WTC11 (cell line): ENCODE measurements at regions of chr12 and their contacts with region 1.

Region 1: GRCh38 chr12:130871286-130872178 is at the start of gene RAN:
- DNase-seq: peak; percentile 80
- ATAC-seq: peak; percentile 71
- H3K4me3 Mint-ChIP-seq: peak within 1 kb of the TSS; percentile 97
- H3K27ac Mint-ChIP-seq: peak within 1 kb of the TSS; percentile 99
- H3K4me1 Mint-ChIP-seq: peaks cover 51% of the 10 kb centered on the region
- H3K27me3 Mint-ChIP-seq: no peaks in the 10 kb centered on the region; the same call in 1 of the 2 replicates
- CTCF ChIP-seq: no peak
- total RNA-seq, gene RAN: 1,744 to 1,783 TPM (median 1,745 TPM) in 3 replicates

Region 2: GRCh38 chr12:130826149-130826801 is 45.3 kb before region 1 on chr12:
- CTCF ChIA-PET with region 1: interaction called, 36 read pairs
- POLR2A ChIA-PET with region 1: interaction called, 3 read pairs
- DNase-seq: peak; percentile 83
- ATAC-seq: peak; percentile 88
- H3K4me3 Mint-ChIP-seq: no peak overlapping the region
- H3K27ac Mint-ChIP-seq: peak overlapping the region; percentile 80
- H3K4me1 Mint-ChIP-seq: peaks cover 36% of the 10 kb centered on the region
- H3K27me3 Mint-ChIP-seq: no peaks in the 10 kb centered on the region
- CTCF ChIP-seq: peak; percentile 98

Region 3: DNA sequence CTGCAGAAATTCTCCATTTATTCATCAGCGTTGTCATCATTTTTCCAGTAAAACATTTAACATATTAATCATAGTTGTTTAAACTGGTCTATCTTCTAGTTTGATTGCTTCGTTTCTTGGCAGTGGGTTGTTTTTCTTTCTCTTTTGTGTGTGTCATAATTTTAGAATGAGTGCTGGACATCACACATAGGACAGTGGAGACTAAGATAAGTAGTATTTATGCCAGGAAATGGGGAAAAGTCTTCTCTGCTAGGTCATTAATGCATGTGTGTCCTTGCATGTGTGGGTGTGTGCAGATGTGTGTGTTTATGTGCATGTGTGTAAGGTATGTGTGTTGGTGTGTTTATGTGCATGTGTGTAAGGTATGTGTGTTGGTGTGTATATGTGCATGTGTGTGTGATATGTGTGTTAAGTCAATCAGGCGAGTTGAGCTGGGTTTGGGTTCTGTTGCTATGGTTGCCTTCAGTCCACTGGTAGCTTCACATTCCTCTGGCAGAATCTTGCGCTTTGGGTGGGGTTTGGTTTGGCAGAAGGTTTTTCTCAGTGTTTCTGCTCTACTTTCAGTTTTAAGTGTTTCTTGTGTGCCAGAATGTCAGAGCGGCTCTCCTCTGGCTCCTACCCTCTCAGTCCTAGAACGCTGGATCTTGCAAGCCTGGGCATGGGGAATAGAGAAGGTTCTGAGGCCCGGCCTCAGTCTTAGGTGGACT is 74.4 kb after region 1 on chr12:
- CTCF ChIA-PET with region 1: no interaction called
- POLR2A ChIA-PET with region 1: no interaction called
- DNase-seq: no peak
- ATAC-seq: no peak
- H3K4me3 Mint-ChIP-seq: no peak overlapping the region
- H3K27ac Mint-ChIP-seq: no peak overlapping the region
- H3K4me1 Mint-ChIP-seq: peaks cover 33% of the 10 kb centered on the region
- H3K27me3 Mint-ChIP-seq: peaks cover 22% of the 10 kb centered on the region
- CTCF ChIP-seq: no peak

Region 4: DNA sequence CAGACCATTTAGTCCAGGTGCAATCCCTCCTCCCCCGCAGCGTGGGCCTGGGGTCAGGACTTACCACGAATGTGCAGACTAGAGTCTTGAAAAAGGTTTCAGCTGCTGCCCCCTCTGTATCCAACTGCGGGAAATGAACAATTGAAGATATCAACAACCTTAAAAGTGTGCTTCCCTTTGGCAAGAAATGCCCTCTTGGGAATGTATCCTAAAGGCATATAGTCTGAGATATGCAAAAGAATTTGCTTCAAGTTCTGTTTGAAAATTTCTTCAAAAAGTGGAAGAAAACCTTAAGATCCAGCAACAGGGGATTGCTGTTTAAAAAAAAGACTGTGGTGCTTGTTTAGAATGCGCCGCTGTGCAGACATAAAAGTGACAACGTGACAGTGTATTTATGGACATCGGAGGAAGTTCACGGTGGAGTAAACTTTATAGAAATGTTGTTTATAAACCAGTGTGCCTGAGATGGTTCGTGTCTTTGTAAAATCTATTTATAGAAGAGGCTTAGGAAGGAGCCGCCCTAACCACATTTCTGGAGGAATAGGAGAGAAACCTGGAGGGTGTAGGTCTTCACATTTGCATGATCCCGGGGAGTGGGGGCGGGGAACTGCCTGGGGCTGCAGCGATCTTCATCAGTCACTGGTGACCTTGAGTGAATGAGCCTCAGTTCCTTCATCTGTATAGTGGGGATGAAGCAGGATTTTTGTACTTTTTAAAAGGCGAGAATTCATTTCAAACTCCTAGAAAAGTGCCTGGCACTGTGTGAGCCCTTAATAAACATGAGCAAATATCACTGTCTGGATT is 109.6 kb after region 1 on chr12:
- CTCF ChIA-PET with region 1: no interaction called
- POLR2A ChIA-PET with region 1: no interaction called
- DNase-seq: no peak
- ATAC-seq: no peak
- H3K4me3 Mint-ChIP-seq: no peak overlapping the region
- H3K27ac Mint-ChIP-seq: no peak overlapping the region
- H3K4me1 Mint-ChIP-seq: peaks cover 11% of the 10 kb centered on the region
- H3K27me3 Mint-ChIP-seq: no peaks in the 10 kb centered on the region
- CTCF ChIP-seq: no peak